ENCODE measurements at regions of chr12 and their contacts with region 1.

Region 1: DNA sequence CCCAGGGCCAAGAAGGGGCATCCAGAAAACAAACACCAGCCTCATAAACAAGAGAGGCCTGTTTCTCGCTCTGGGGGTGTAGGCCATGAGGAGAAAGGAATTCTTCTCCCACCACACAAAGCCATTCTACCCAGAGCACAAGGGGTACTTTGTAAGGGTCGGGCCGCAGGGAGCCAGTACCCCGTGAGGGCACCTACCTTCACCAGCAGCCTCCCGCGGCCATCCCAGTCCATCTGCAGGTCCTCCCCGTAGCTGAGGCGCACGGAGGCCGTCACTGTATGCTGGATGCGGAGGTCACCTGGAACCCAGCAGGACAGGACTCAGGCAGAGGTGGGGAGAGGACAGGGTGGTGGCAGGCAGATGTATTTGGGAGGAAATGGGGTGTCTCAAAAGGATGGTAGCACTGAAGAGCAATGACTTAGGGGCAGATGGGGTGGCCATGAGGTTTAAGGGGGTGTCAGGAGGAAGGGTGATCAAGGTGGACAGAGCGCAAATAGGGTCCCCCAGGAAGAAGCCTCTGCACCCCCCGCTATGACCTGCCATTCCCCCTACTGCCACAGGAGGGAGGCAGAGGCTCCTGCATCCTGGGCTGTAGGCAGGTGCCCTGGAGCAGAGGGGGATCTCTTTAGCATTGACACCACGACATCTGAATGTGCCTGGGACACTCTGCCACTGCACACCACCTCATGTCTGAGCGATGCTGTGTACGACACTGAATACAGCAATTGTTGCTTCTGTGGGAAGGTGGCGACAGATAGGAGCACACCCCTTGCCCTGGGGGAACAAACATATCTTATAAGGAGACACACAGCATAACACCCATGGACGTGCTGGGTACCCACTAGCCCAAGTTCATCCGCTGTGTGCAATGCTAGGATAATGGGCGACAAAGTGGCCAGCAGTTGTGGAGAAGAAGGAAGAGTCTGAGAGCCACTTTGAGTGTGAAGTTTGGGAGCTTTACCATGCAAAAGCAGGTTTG is 61.4 kb downstream of the VWF start:
- DNase-seq: no peak
- H3K4me3 ChIP-seq: no peak overlapping the region
- H3K27ac ChIP-seq: peak overlapping the region; percentile 16 to 93 (median 88)
- H3K4me1 ChIP-seq: peaks cover 26 to 62% (median 41%) of the 10 kb centered on the region in 3 donors
- H3K27me3 ChIP-seq: no peaks in the 10 kb centered on the region
- CTCF ChIP-seq: peak; percentile 54 to 96 (median 92)
- POLR2A ChIP-seq: no peak

Region 2: GRCh38 chr12:5713599-5714081 is 349.4 kb before region 1 on chr12:
- intact Hi-C with region 1: no loop called
- DNase-seq: no peak
- H3K4me3 ChIP-seq: no peak overlapping the region
- H3K27ac ChIP-seq: no peak overlapping the region
- H3K4me1 ChIP-seq: peaks cover 0 to 10% (median 8%) of the 10 kb centered on the region in 3 donors
- H3K27me3 ChIP-seq: peaks cover 0 to 2% (median 0%) of the 10 kb centered on the region in 4 donors
- CTCF ChIP-seq: no peak
- POLR2A ChIP-seq: no peak

Region 3: DNA sequence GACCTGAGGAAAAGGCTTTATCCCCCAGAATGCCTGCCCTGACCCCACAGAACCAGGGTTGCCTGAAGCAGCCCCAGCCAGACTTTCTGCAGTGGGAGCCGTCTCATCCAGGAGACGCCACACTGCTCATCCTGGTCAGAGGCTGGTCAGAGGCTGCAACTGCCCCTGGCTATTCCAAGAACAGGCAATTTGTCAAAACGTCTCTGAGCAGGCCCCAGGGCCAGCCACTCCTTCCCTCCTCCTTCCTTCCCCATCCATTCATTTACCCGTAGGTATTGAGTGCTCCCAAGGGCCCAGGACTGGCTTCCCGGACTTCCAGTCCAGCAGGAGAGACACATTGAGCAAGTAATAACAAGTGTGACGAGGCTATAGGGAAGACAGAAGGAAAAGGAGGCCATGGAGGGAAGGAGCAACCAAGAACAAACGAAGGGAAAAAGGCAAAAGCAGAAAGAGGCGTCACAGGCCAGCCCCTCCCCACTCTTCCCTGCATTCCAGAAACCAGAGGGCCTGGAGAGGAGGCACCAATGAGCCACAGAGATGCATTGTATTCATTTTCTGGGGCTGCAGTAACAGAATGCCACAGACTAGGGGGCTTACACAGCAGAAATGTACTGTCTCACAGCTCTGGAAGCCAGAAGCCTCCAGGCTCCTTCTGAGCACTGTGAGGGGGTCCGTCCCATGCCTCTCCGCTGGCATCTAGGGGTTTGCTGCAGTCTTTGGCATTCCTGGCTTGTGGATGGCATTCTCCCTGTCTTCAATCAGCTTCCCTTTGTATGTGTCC is 116.1 kb after region 1 on chr12:
- intact Hi-C with region 1: loop called (anchors 5 kb)
- DNase-seq: no peak
- H3K4me3 ChIP-seq: no peak overlapping the region
- H3K27ac ChIP-seq: peak overlapping the region in 3 of 4 donors; percentile 89 to 91 (median 90)
- H3K4me1 ChIP-seq: peaks cover 30 to 56% (median 49%) of the 10 kb centered on the region in 3 donors
- H3K27me3 ChIP-seq: no peaks in the 10 kb centered on the region
- CTCF ChIP-seq: no peak
- POLR2A ChIP-seq: no peak

Region 4: DNA sequence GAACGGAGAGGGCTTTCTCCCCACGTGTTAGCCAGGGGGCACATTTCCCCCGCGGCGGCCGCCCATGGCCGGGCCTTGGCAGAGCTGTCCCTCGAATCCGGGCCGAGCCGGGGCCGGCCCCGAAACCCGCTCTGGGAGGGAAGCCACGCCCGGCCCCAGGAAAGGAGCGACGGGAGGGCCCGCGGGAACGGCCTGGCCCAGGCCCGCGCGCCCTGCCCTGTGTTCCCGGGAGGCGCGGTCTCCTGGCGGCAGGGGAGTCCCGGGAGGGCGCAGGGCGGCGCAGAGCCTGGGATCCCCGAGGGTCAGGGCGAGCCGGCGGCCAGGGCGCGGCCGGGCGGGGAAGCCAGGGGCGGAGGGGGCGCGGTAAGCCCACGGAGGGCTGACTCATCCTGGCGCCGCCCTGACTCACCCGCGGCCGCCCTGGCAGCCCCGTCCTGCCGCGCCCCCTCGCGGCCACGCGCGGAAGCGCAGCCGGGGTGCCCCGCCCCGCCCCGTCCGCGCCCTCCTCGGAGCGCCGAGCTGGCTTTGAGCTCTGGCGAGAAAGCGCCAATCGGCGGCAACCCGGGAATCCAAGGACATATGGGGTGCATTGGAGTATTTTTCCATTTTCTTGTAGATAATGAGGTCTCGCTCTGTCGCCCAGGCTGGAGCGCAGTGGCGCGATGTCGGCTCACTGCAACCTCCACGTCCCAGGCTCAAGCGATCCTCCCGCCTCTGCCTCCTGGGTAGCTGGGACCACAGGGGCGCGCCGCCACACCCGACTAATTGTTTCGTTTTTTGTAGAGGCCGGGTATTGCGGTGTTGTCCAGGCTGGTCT is 215.6 kb after region 1 on chr12:
- intact Hi-C with region 1: loop called (anchors 5 kb)
- DNase-seq: no peak
- H3K4me3 ChIP-seq: peak overlapping the region; percentile 28 to 73 (median 43)
- H3K27ac ChIP-seq: peak overlapping the region; percentile 92 to 99 (median 96)
- H3K4me1 ChIP-seq: peaks cover 34 to 71% (median 38%) of the 10 kb centered on the region in 3 donors
- H3K27me3 ChIP-seq: no peaks in the 10 kb centered on the region
- CTCF ChIP-seq: peak; percentile 65 to 100 (median 100)
- POLR2A ChIP-seq: peak in 2 of 4 donors; percentile 39

Measured in esophagus squamous epithelium (tissue), 5 donors.